ENCODE measurements at regions of chr7 and their contacts with region 1.

Region 1: DNA sequence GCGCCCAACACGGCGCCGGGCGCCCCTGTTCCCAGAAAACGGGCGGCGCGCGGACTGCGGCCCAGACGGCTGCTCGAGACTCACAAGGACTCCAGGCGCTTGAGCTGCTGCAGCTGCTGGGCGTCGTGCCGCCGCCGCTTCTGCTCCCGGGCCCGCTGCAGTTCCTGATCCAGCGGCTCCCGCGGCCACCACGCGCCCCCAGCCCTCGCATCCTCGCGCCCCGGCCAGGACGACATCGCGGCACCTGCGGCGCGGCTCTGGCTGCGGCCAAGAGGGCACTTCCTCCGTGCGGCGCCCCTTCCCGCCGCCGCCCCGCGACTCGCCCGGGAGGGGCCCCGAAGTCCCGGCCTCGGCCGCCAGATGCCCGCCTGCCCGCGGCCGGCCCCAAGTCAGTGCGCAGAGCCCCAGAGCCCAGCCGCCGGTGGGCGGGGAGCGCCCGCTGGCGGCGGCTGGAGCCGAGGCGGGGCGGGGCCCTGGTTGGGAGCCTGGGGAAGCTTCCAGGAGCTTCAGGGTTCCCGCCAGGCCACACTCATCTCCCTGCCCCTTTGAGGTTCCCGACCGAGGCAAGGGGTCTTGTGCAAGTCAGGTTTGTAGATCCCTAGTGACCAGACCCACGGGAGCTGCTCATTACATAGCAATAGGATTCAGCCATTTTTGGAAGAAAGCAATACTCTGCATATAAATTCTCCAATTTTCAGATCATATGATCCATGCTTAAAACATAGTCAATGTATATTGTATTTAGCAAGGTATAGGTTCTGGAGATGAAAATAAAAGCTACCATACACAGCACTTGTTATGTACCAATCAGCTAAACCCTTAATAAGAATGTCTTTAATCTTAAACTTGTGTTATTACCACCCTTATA is 14.2 kb upstream of the FKBP9 start:
- DNase-seq: peak; percentile 82
- H3K4me3 Mint-ChIP-seq: peak overlapping the region; percentile 72
- H3K27ac Mint-ChIP-seq: no peak overlapping the region
- H3K4me1 Mint-ChIP-seq: peaks cover 10% of the 10 kb centered on the region
- H3K27me3 Mint-ChIP-seq: peaks cover 3% of the 10 kb centered on the region

Region 2: GRCh38 chr7:32515890-32516550 is 427.0 kb before region 1 on chr7:
- CTCF ChIA-PET with region 1: no interaction called
- POLR2A ChIA-PET with region 1: no interaction called
- intact Hi-C with region 1: no loop called
- DNase-seq: no peak
- H3K4me3 Mint-ChIP-seq: no peak overlapping the region
- H3K27ac Mint-ChIP-seq: peak overlapping the region; percentile 26
- H3K4me1 Mint-ChIP-seq: peaks cover 67% of the 10 kb centered on the region
- H3K27me3 Mint-ChIP-seq: no peaks in the 10 kb centered on the region

Region 3: DNA sequence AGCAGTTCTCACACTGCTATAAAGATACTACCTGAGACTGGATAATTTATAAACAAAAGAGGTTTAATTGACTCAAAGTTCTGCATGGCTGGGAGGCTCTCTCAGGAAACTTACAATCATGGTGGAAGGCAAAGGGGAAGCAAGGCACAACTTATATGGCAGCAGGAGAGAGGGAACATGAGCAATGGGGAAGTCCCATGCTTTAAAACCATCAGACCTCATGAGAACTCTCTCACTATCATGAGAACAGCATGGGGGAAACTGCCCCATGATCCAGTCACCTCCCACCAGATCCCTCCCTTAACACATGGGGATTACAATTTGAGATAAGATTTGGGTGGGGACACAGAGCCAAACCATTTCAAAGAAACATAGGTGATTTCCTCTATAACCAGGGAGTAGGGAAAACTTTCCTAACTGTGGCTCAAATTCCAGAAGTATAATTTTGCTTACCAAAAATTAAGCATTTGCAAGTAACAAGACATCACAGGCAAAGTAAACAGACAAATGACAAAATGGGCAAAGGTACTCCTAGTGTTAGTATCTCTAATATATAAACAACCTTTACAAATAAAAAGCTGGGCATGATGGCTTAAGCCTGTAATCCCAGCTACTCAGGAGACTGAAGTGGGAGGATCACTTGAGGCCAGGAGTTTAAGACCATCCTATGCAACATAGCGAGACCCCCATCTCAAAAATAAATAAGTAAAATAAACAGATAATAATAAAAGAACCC is 139.4 kb before region 1 on chr7:
- CTCF ChIA-PET with region 1: interaction called, 10 read pairs
- POLR2A ChIA-PET with region 1: no interaction called
- intact Hi-C with region 1: loop called (anchors 1 kb)
- DNase-seq: no peak
- H3K4me3 Mint-ChIP-seq: no peak overlapping the region
- H3K27ac Mint-ChIP-seq: no peak overlapping the region
- H3K4me1 Mint-ChIP-seq: no peaks in the 10 kb centered on the region
- H3K27me3 Mint-ChIP-seq: no peaks in the 10 kb centered on the region

Region 4: DNA sequence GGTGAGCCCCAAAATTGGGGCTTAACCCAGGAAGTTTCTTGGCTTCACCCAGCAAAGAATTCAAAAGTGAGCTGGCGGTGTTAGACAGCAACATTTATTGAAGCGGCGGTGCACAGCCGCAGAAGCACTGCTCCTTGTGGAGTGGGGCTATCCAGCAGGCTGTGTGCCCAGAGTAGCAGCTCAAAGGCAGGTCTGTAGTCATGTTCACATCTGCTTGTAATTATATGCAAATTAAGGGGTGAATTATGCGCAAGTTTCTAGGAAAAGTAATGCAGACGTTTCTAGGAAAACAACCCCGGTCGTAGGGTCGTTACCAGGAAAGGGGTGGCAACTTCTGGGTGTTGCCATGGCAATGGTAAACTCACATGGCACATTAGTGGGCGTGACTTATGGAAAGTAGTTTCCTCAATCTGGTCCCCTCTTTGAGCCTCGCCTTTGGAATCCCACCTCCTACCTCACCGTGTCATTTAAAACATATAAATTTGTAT is 37.8 kb before region 1 on chr7:
- CTCF ChIA-PET with region 1: interaction called, 6 read pairs
- POLR2A ChIA-PET with region 1: interaction called, 3 read pairs
- intact Hi-C with region 1: loop called (anchors 1 kb)
- DNase-seq: peak; percentile 89
- H3K4me3 Mint-ChIP-seq: peak overlapping the region; percentile 73
- H3K27ac Mint-ChIP-seq: peak overlapping the region; percentile 93
- H3K4me1 Mint-ChIP-seq: peaks cover 17% of the 10 kb centered on the region
- H3K27me3 Mint-ChIP-seq: no peaks in the 10 kb centered on the region

Region 5: DNA sequence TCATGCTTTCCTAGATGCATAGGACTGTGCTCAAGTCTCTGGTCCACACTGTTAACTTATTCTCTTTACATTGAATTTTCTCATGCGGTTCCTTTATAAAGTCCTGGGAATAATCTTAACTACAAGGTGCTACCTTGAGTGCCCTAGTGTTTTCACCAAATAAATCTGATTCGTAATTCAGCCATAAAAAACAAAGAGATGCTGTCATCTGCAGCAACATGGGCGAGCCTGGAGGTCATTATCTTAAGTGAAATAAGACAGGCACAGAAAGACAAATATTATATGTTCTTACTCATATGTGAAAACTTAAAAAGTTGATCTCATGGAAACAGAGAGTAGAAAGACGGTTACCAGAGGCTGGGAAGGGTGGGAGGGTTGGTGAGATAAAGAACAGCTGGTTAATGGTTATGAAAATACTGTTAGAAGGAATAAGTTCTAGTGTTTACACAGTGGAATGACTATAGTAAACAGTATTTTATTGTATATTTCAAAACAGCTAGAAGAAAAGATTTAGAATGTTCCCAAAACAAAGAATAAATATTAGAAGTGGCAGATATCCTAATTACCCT is 81.3 kb after region 1 on chr7:
- CTCF ChIA-PET with region 1: no interaction called
- POLR2A ChIA-PET with region 1: no interaction called
- intact Hi-C with region 1: no loop called
- DNase-seq: no peak
- H3K4me3 Mint-ChIP-seq: no peak overlapping the region
- H3K27ac Mint-ChIP-seq: no peak overlapping the region
- H3K4me1 Mint-ChIP-seq: no peaks in the 10 kb centered on the region
- H3K27me3 Mint-ChIP-seq: no peaks in the 10 kb centered on the region

Region 6: GRCh38 chr7:33050535-33051318 is 107.7 kb after region 1 on chr7:
- CTCF ChIA-PET with region 1: no interaction called
- POLR2A ChIA-PET with region 1: no interaction called
- intact Hi-C with region 1: loop called (anchors 1 kb)
- DNase-seq: no peak
- H3K4me3 Mint-ChIP-seq: no peak overlapping the region
- H3K27ac Mint-ChIP-seq: no peak overlapping the region
- H3K4me1 Mint-ChIP-seq: peaks cover 44% of the 10 kb centered on the region
- H3K27me3 Mint-ChIP-seq: no peaks in the 10 kb centered on the region